ENCODE measurements at regions of chrX and their contacts with region 1.

Region 1: GRCh38 chrX:103585411-103586313 is at the start of gene TCEAL4:
- DNase-seq: peak; percentile 68
- ATAC-seq: peak; percentile 85
- H3K4me3 Mint-ChIP-seq: peak within 1 kb of the TSS; percentile 82
- H3K27ac Mint-ChIP-seq: peak within 1 kb of the TSS; percentile 79
- H3K4me1 Mint-ChIP-seq: peaks cover 16% of the 10 kb centered on the region
- H3K27me3 Mint-ChIP-seq: peaks cover under 1% of the 10 kb centered on the region
- total RNA-seq, gene TCEAL4: 17.1 to 18.5 TPM

Region 2: DNA sequence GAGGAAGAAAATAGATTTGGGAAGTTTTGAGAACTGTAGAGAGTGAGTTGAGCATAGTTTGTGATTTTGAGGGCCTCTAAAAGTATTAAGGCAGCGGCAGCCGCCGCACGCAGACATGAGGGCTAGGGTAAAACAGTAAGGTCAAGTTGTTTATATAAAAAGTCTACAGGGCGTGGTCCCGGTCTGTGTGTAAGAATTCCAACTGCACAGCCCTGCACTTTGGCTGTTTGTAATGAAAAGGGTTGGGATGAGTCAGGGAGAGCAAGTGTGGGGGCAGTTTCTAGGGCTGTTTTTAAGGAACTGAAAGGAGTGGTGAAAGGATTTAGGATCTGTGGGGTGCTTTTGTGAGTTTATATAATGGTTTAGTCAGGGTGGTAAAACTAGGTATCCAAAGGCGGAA is 154.3 kb before region 1 on chrX:
- CTCF ChIA-PET with region 1: no interaction called
- POLR2A ChIA-PET with region 1: no interaction called
- intact Hi-C with region 1: no loop called
- DNase-seq: no peak
- ATAC-seq: no peak
- H3K4me3 Mint-ChIP-seq: no peak overlapping the region
- H3K27ac Mint-ChIP-seq: no peak overlapping the region
- H3K4me1 Mint-ChIP-seq: no peaks in the 10 kb centered on the region
- H3K27me3 Mint-ChIP-seq: peaks cover 2% of the 10 kb centered on the region

Region 3: GRCh38 chrX:103629318-103630170 is 43.9 kb after region 1 on chrX:
- CTCF ChIA-PET with region 1: no interaction called
- POLR2A ChIA-PET with region 1: no interaction called
- intact Hi-C with region 1: loop called in 1 of 2 experiments (anchors 2 kb)
- DNase-seq: peak; percentile 55
- ATAC-seq: peak; percentile 58
- H3K4me3 Mint-ChIP-seq: peak overlapping the region; percentile 81
- H3K27ac Mint-ChIP-seq: peak overlapping the region; percentile 87
- H3K4me1 Mint-ChIP-seq: peaks cover 18% of the 10 kb centered on the region
- H3K27me3 Mint-ChIP-seq: no peaks in the 10 kb centered on the region

Measured in activated CD4-positive, alpha-beta T cell treated with anti-CD3 and anti-CD28 coated beads for 36 hours (primary cell).